ENCODE measurements at regions of chr17 and their contacts with region 1.

Region 1: GRCh38 chr17:1186923-1187771 is 7.4 kb upstream of the ABR start:
- DNase-seq: peak; percentile 54 to 78 (median 72)
- ATAC-seq: peak; percentile 83 to 99
- H3K4me3 Mint-ChIP-seq: no peak overlapping the region
- H3K27ac Mint-ChIP-seq: peak overlapping the region in 1 of 10 donors; percentile 43
- H3K4me1 Mint-ChIP-seq: peaks cover 7 to 34% (median 19%) of the 10 kb centered on the region in 4 donors
- H3K27me3 Mint-ChIP-seq: no peaks in the 10 kb centered on the region

Region 2: GRCh38 chr17:1104222-1104621 is 82.9 kb before region 1 on chr17:
- POLR2A ChIA-PET with region 1: no interaction called
- DNase-seq: no peak
- ATAC-seq: no peak
- H3K4me3 Mint-ChIP-seq: no peak overlapping the region
- H3K27ac Mint-ChIP-seq: no peak overlapping the region
- H3K4me1 Mint-ChIP-seq: peaks cover 17 to 31% (median 24%) of the 10 kb centered on the region in 4 donors
- H3K27me3 Mint-ChIP-seq: no peaks in the 10 kb centered on the region

Region 3: GRCh38 chr17:1197781-1198490 is 10.8 kb after region 1 on chr17:
- POLR2A ChIA-PET with region 1: interaction called, 13 read pairs
- DNase-seq: peak; percentile 23 to 81 (median 67)
- ATAC-seq: peak; percentile 70 to 79
- H3K4me3 Mint-ChIP-seq: peak overlapping the region; percentile 29 to 83 (median 66)
- H3K27ac Mint-ChIP-seq: peak overlapping the region; percentile 57 to 94 (median 90)
- H3K4me1 Mint-ChIP-seq: peaks cover 24 to 82% (median 57%) of the 10 kb centered on the region in 4 donors
- H3K27me3 Mint-ChIP-seq: no peaks in the 10 kb centered on the region

Region 4: DNA sequence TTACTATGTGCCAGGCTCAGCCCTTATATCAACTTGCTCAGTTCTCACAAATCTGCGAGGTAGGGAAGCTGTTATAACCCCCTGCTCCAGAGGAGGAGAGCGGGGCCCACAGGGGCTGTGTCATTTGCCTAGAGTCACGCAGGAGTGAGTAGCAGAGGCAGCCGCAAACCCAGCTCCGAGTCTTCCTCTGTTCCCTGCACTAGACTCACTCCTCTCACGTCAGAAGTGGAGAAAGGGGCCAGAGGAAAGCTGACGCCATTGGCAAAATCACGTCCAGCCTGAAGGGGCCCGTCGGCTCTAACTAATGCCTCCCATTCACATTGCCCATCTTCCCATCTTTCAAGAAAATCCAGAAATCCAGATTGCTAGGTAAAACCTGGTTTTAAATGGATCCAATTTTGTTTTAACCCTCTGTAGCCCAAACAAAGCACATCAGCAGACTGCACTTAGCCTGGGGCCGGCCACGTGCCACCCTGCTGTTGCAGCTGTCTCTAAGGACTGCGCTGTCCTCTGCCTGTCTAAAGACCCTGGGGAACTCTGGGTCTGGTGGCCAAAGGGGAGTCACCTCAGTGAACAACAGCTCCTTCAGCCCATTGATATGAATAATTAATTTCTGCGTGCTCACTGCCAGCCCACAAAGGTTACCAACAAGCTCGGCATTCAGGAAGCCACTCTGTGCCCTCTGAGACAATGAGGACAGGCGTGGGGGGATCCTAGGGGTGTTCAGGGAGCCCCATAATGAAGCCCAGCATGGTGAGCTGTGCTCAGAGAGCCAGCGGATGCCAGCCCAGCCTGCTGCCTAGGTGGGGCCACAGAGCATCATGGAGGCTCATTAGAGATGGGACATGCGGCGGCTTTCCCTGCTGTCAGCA is 29.3 kb after region 1 on chr17:
- POLR2A ChIA-PET with region 1: no interaction called
- DNase-seq: no peak
- ATAC-seq: no peak
- H3K4me3 Mint-ChIP-seq: no peak overlapping the region
- H3K27ac Mint-ChIP-seq: no peak overlapping the region
- H3K4me1 Mint-ChIP-seq: peaks cover 0 to 23% (median under 1%) of the 10 kb centered on the region in 4 donors
- H3K27me3 Mint-ChIP-seq: peaks cover 0 to 10% (median 0%) of the 10 kb centered on the region in 5 donors